Naive thymus-derived CD4-positive, alpha-beta T cell (primary cell): ENCODE measurements at regions of chr12 and their contacts with region 1.

Region 1: GRCh38 chr12:56636675-56637540 is 6.8 kb upstream of the BAZ2A start:
- DNase-seq: peak; percentile 86 to 99 (median 94)
- ATAC-seq: peak; percentile 83
- H3K4me3 ChIP-seq: peak overlapping the region; percentile 73
- H3K4me3 Mint-ChIP-seq: peak overlapping the region; percentile 87 to 100 (median 96)
- H3K27ac ChIP-seq: peak overlapping the region; percentile 83
- H3K27ac Mint-ChIP-seq: peak overlapping the region; percentile 89 to 99 (median 97)
- H3K4me1 ChIP-seq: peaks cover 27 to 36% of the 10 kb centered on the region in 2 donors
- H3K4me1 Mint-ChIP-seq: peaks cover 28 to 69% (median 57%) of the 10 kb centered on the region in 7 donors
- H3K27me3 ChIP-seq: no peaks in the 10 kb centered on the region
- H3K27me3 Mint-ChIP-seq: no peaks in the 10 kb centered on the region

Region 2: GRCh38 chr12:55715833-55716581 is 920.9 kb before region 1 on chr12 and contains the start of gene BLOC1S1:
- CTCF ChIA-PET with region 1: no interaction called
- POLR2A ChIA-PET with region 1: no interaction called
- intact Hi-C with region 1: loop called in 1 of 2 experiments (anchors 1 kb)
- DNase-seq: peak; percentile 82 to 95 (median 90)
- ATAC-seq: peak; percentile 96
- H3K4me3 ChIP-seq: peak within 1 kb of the TSS; percentile 96
- H3K4me3 Mint-ChIP-seq: peak within 1 kb of the TSS; percentile 83 to 98 (median 94)
- H3K27ac ChIP-seq: peak within 1 kb of the TSS; percentile 92
- H3K27ac Mint-ChIP-seq: peak within 1 kb of the TSS; percentile 91 to 98 (median 97)
- H3K4me1 ChIP-seq: peaks cover 19 to 23% of the 10 kb centered on the region in 2 donors
- H3K4me1 Mint-ChIP-seq: peaks cover 15 to 41% (median 36%) of the 10 kb centered on the region in 7 donors
- H3K27me3 ChIP-seq: no peaks in the 10 kb centered on the region
- H3K27me3 Mint-ChIP-seq: peaks cover 0 to 21% (median 0%) of the 10 kb centered on the region in 5 donors
- total RNA-seq, gene BLOC1S1: 37.6 to 112 (median 71.5) TPM

Region 3: GRCh38 chr12:56258057-56258819 is 378.7 kb before region 1 on chr12 and contains the start of gene ANKRD52:
- CTCF ChIA-PET with region 1: no interaction called
- POLR2A ChIA-PET with region 1: no interaction called
- intact Hi-C with region 1: no loop called
- DNase-seq: peak; percentile 69 to 92 (median 84)
- ATAC-seq: peak; percentile 99
- H3K4me3 ChIP-seq: peak within 1 kb of the TSS; percentile 99
- H3K4me3 Mint-ChIP-seq: peak within 1 kb of the TSS; percentile 87 to 97 (median 93)
- H3K27ac ChIP-seq: peak within 1 kb of the TSS; percentile 90
- H3K27ac Mint-ChIP-seq: peak within 1 kb of the TSS; percentile 83 to 94 (median 90)
- H3K4me1 ChIP-seq: peaks cover 18 to 19% of the 10 kb centered on the region in 2 donors
- H3K4me1 Mint-ChIP-seq: peaks cover 13 to 27% (median 22%) of the 10 kb centered on the region in 7 donors
- H3K27me3 ChIP-seq: no peaks in the 10 kb centered on the region
- H3K27me3 Mint-ChIP-seq: peaks cover 0 to 2% (median 0%) of the 10 kb centered on the region in 5 donors
- total RNA-seq, gene ANKRD52: 26.9 to 64.4 (median 40.7) TPM

Region 4: DNA sequence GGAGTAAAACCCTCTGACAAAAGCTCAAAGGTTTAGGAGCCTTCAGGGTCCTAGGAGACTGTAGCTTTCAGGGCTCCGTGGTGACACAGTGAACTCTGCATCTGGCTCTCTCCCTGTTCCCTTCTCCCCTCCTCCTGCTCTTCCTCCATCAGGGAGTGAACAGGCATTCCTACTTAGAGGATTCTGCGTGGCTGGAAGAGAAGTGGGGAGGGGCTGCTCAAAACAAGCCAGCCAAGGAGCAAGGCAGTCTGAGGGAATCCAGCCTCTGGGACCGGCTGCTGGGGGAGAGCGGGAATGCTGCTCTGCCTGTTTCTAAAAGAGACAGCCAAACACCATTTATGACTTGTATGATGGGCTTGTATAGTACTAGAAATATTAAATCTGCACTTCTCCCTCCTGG is 65.8 kb before region 1 on chr12:
- CTCF ChIA-PET with region 1: interaction called, 5 read pairs
- POLR2A ChIA-PET with region 1: no interaction called
- intact Hi-C with region 1: loop called in 1 of 2 experiments (anchors 2 kb)
- DNase-seq: no peak
- ATAC-seq: no peak
- H3K4me3 ChIP-seq: no peak overlapping the region
- H3K4me3 Mint-ChIP-seq: peak overlapping the region in 2 of 10 donors; percentile 23 to 49
- H3K27ac ChIP-seq: no peak overlapping the region
- H3K27ac Mint-ChIP-seq: peak overlapping the region in 3 of 9 donors; percentile 15 to 67 (median 28)
- H3K4me1 ChIP-seq: peaks cover 0 to 22% of the 10 kb centered on the region in 2 donors
- H3K4me1 Mint-ChIP-seq: peaks cover 9 to 31% (median 23%) of the 10 kb centered on the region in 7 donors
- H3K27me3 ChIP-seq: no peaks in the 10 kb centered on the region
- H3K27me3 Mint-ChIP-seq: no peaks in the 10 kb centered on the region

Region 5: GRCh38 chr12:56616925-56617324 is 20.0 kb before region 1 on chr12:
- CTCF ChIA-PET with region 1: interaction called, 5 read pairs
- POLR2A ChIA-PET with region 1: interaction called, 17 read pairs
- intact Hi-C with region 1: loop called in 1 of 2 experiments (anchors 2 kb)
- DNase-seq: no peak
- ATAC-seq: no peak
- H3K4me3 ChIP-seq: no peak overlapping the region
- H3K4me3 Mint-ChIP-seq: no peak overlapping the region
- H3K27ac ChIP-seq: no peak overlapping the region
- H3K27ac Mint-ChIP-seq: peak overlapping the region in 3 of 9 donors; percentile 1 to 3 (median 2)
- H3K4me1 ChIP-seq: peaks cover 0 to 4% of the 10 kb centered on the region in 2 donors
- H3K4me1 Mint-ChIP-seq: peaks cover 14 to 40% (median 30%) of the 10 kb centered on the region in 7 donors
- H3K27me3 ChIP-seq: no peaks in the 10 kb centered on the region
- H3K27me3 Mint-ChIP-seq: no peaks in the 10 kb centered on the region

Region 6: DNA sequence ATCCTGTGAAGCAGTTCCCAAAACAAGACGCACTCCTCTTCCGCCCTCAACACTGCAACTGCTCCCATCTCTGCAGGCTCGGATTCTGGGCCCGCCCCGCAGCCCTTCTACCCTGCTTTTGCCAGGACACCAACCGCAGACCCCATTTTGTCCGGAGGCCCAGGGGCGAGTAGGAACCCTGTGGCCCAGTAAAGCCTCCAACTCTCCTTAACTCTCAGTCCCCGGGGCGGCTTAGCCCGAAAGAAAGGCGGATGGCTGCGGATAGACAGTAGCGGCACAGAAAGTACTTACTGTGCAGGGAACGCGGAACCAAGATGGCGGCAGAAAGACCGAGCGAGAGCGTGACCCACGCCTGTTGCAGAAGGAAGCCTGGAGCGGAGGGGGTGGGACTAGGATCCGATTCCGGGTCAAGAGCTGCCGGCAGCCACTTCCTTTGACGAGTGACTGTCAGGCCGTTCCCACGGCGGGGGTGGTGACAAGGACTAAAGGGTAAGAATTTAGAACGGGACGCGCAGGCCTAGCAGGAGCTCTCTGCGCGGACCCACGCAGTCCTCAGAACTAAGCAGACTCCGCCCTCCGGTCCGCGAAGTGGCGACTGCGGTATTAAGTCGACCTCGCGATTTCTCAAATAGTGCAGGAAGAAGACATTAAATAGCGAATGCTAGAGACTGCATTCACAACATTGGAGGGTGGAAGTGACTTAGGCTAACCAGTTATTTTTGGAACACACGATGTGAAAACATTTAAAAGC is 88.2 kb after region 1 on chr12 and contains the start of gene NACA:
- CTCF ChIA-PET with region 1: interaction called, 4 read pairs
- POLR2A ChIA-PET with region 1: interaction called, 27 read pairs
- intact Hi-C with region 1: loop called (anchors 2 kb)
- DNase-seq: peak; percentile 85 to 99 (median 96)
- ATAC-seq: peak; percentile 95
- H3K4me3 ChIP-seq: peak within 1 kb of the TSS; percentile 100
- H3K4me3 Mint-ChIP-seq: peak within 1 kb of the TSS; percentile 94 to 100 (median 97)
- H3K27ac ChIP-seq: peak within 1 kb of the TSS; percentile 87
- H3K27ac Mint-ChIP-seq: peak within 1 kb of the TSS; percentile 94 to 100 (median 98)
- H3K4me1 ChIP-seq: peaks cover 40 to 43% of the 10 kb centered on the region in 2 donors
- H3K4me1 Mint-ChIP-seq: peaks cover 39 to 53% (median 49%) of the 10 kb centered on the region in 7 donors
- H3K27me3 ChIP-seq: no peaks in the 10 kb centered on the region
- H3K27me3 Mint-ChIP-seq: no peaks in the 10 kb centered on the region
- total RNA-seq, gene NACA: 834 to 1,486 (median 1,355) TPM

Region 7: GRCh38 chr12:57063991-57064685 is 427.2 kb after region 1 on chr12:
- CTCF ChIA-PET with region 1: interaction called, 3 read pairs
- POLR2A ChIA-PET with region 1: no interaction called
- intact Hi-C with region 1: loop called in 1 of 2 experiments (anchors 2 kb)
- DNase-seq: peak in 7 of 9 donors; percentile 67 to 90 (median 85)
- ATAC-seq: peak; percentile 97
- H3K4me3 ChIP-seq: peak overlapping the region; percentile 15
- H3K4me3 Mint-ChIP-seq: peak overlapping the region; percentile 13 to 90 (median 80)
- H3K27ac ChIP-seq: peak overlapping the region; percentile 76
- H3K27ac Mint-ChIP-seq: peak overlapping the region; percentile 79 to 97 (median 91)
- H3K4me1 ChIP-seq: peaks cover 17 to 20% of the 10 kb centered on the region in 2 donors
- H3K4me1 Mint-ChIP-seq: peaks cover 10 to 45% (median 34%) of the 10 kb centered on the region in 7 donors
- H3K27me3 ChIP-seq: no peaks in the 10 kb centered on the region
- H3K27me3 Mint-ChIP-seq: no peaks in the 10 kb centered on the region